ENCODE measurements at regions of chr14 and their contacts with region 1.

Region 1: DNA sequence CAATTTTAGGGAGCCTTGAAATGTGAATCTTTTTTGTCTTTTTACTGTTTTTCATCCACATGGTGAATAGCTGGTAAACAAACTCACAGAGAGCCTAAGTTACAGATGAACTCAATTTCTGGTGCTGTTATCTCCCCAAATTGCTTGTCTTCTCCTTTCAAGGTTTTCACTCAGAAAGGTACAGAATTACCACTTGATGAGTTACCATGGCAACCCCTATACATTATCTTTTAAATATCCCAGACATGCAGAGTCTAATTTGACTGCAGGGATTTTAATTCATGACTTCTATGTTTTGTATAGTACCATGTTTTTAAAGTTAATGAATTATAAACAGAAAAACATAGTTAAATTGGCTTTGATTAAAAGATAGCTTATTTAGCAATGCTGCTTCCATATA is 203.7 kb downstream of the PELI2 start:
- DNase-seq: no peak
- ATAC-seq: no peak
- H3K4me3 ChIP-seq: no peak overlapping the region
- H3K27ac ChIP-seq: no peak overlapping the region
- H3K4me1 ChIP-seq: no peaks in the 10 kb centered on the region
- H3K27me3 ChIP-seq: peaks cover 4% of the 10 kb centered on the region
- CTCF ChIP-seq: no peak

Region 2: GRCh38 chr14:56294130-56294529 is 27.7 kb before region 1 on chr14:
- CTCF ChIA-PET with region 1: no interaction called
- POLR2A ChIA-PET with region 1: no interaction called
- in situ Hi-C with region 1: no loop called
- intact Hi-C with region 1: no loop called
- DNase-seq: no peak
- ATAC-seq: no peak
- H3K4me3 ChIP-seq: no peak overlapping the region
- H3K27ac ChIP-seq: no peak overlapping the region
- H3K4me1 ChIP-seq: no peaks in the 10 kb centered on the region
- H3K27me3 ChIP-seq: no peaks in the 10 kb centered on the region
- CTCF ChIP-seq: no peak

Region 3: DNA sequence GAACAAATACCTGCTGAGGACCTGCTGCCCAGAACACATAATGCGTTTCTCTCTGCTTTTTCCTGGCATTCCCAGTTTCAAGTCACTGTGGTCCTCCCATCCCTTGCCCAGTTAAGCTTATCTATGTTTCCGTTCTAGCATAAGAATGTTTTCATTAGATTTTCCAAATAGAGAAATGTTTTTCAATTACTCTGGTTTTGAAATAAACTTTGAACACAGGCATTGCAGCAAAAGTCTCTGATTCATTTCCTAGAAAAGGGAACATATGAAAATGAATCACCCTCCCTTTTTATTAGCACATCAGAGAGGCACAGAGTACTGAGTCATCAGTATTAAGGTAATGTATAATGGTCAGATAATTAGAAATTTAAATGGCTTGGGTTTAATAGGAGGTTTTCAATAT is 56.6 kb after region 1 on chr14:
- CTCF ChIA-PET with region 1: no interaction called
- POLR2A ChIA-PET with region 1: no interaction called
- in situ Hi-C with region 1: no loop called
- intact Hi-C with region 1: loop called (anchors 2 kb)
- DNase-seq: no peak
- ATAC-seq: no peak
- H3K4me3 ChIP-seq: no peak overlapping the region
- H3K27ac ChIP-seq: no peak overlapping the region
- H3K4me1 ChIP-seq: no peaks in the 10 kb centered on the region
- H3K27me3 ChIP-seq: no peaks in the 10 kb centered on the region
- CTCF ChIP-seq: no peak

Region 4: GRCh38 chr14:56463271-56463890 is 141.5 kb after region 1 on chr14:
- CTCF ChIA-PET with region 1: no interaction called
- POLR2A ChIA-PET with region 1: no interaction called
- in situ Hi-C with region 1: no loop called
- intact Hi-C with region 1: no loop called
- DNase-seq: no peak
- ATAC-seq: no peak
- H3K4me3 ChIP-seq: no peak overlapping the region
- H3K27ac ChIP-seq: no peak overlapping the region
- H3K4me1 ChIP-seq: no peaks in the 10 kb centered on the region
- H3K27me3 ChIP-seq: no peaks in the 10 kb centered on the region
- CTCF ChIP-seq: no peak

Measured in Panc1 (cell line).